ENCODE measurements at regions of chr17 and their contacts with region 1.

Region 1: DNA sequence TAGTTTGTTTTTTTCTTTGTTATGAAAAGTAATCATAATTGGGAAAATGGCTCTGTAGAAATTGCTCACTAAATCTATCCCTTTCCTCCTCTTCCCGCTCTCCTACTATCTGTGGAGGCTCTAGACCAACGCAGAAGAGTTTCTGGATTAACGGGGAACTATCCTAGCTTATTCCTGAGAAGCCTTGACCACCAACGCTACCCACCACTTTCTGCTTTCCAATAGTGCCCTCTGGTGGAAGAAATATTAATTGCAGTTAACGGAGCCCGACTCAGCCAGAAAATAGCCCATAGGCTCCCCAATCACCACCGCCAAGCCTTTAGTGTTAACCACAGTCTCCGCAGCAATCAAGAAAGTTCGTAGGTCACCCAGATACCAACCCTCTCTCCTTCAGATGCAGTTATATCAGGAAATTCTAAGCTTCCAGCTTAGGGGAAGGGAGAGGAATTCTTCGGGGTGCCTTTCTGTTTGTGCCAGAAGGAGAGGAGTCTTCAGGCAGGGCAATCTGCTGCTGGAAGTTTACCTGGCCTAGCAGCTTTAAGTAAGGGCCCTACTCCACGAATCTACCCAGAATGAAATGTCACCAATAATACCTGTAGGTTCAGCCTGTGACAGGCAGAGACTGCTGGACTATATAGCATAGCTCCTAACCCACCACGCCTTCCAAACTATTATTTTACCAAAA is 23.0 kb upstream of the NSRP1 start:
- DNase-seq: no peak
- H3K4me3 ChIP-seq: no peak overlapping the region
- CTCF ChIP-seq: peak; percentile 41

Region 2: GRCh38 chr17:29640413-29640812 is 453.2 kb before region 1 on chr17:
- CTCF ChIA-PET with region 1: interaction called, 24 read pairs
- POLR2A ChIA-PET with region 1: no interaction called
- DNase-seq: peak; percentile 57
- H3K4me3 ChIP-seq: no peak overlapping the region
- CTCF ChIP-seq: no peak

Region 3: GRCh38 chr17:30000001-30000754 is 93.4 kb before region 1 on chr17:
- CTCF ChIA-PET with region 1: interaction called, 10 read pairs
- POLR2A ChIA-PET with region 1: no interaction called
- DNase-seq: no peak
- H3K4me3 ChIP-seq: no peak overlapping the region
- CTCF ChIP-seq: no peak

Region 4: DNA sequence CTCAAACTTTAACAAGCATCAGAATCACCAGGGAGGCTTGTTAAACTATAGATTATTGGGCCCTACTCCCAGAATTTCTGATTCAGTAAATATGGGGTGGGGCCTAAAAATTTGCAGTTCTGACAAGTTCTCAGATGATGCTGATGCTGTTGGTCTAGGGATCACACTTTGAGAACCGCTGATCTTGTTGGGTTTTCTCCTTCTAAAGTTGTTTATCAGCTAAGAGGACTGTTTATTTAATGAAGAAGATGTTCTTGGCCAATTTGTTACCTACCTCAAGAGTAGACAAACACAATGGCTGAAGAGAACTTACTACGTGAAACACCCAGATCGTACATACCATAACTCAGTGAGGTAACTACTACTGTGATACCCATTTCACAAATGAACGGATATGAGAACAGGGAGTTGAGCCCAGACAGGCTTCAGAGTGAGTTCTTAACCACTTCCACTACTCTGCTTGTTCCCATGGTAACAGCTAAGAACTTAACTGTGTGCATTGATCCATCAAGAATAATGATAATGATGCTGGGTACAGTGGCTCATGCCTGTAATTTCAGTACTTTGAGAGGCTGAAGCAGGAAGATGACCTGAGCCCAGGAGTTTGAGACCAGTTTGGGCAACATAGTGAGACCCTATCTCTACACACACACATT is 62.3 kb before region 1 on chr17:
- CTCF ChIA-PET with region 1: interaction called, 224 read pairs
- POLR2A ChIA-PET with region 1: no interaction called
- DNase-seq: no peak
- H3K4me3 ChIP-seq: no peak overlapping the region
- CTCF ChIP-seq: no peak

Region 5: DNA sequence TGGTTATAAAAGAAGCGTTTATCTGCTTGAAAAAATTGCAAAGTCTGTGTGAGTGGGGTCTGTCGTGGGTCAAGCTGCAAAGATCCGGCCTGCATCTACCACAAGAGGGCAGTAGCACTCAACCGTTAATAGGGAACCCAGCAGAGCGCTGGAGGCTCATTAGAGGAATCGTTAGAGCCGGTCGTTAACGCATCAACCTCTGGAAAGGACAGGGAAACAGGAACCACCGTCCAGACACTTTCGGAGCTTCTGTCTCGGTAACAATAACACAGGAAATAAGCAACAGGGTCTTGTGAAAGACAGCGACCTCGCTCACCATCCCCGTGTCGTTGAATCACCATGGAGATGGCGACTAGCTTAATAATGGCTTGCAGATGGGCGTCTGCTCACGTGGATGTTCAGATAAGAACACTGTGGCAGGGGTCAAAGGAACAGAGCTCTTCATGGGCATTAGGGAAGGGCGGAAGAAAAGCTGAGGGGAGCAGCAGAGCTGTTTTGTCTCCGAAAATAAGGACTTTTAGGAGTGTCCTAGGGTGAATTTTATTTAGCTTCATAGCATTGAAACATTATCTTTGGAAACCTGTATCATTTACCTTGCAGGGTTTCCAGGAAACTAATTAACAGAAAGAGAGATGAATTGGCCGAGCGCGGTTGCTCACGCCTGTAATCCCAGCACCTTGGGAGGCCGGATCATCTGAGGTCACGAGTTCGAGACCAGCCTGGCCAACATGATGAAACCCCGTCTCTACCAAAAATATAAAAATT is 11.2 kb after region 1 on chr17:
- CTCF ChIA-PET with region 1: interaction called, 230 read pairs
- POLR2A ChIA-PET with region 1: interaction called, 4 read pairs
- DNase-seq: no peak
- H3K4me3 ChIP-seq: peak overlapping the region; percentile 60
- CTCF ChIP-seq: peak; percentile 86

Measured in AG04449 (cell line).